ENCODE measurements at regions of chr12 and their contacts with region 1.

Region 1: GRCh38 chr12:96285158-96285557 is 91.0 kb downstream of the ELK3 start:
- DNase-seq: no peak
- H3K4me3 ChIP-seq: no peak overlapping the region
- H3K27ac ChIP-seq: peak overlapping the region in 3 of 4 donors; percentile 12 to 23 (median 16)
- H3K4me1 ChIP-seq: peaks cover 0 to 13% (median under 1%) of the 10 kb centered on the region in 4 donors
- H3K27me3 ChIP-seq: no peaks in the 10 kb centered on the region
- CTCF ChIP-seq: no peak
- EP300 ChIP-seq: no peak
- POLR2A ChIP-seq: no peak

Region 2: DNA sequence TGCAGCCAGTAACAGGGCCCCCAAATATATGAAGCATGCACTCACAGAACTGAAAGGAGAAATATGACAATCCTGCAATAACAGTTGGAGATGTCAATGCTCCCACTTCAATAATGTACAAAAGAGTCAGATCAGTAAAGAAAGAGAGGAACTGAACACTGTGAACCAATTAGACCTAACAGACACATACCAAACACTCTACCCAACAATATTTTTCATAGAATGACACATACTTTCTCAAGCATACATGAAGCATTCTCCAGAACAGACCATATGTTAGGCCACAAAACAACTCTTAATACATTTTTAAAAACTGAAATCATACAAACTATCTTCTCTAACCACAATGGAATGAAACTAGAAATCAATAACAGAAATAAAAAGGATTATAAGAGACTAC is 10.8 kb before region 1 on chr12:
- intact Hi-C with region 1: no loop called
- DNase-seq: no peak
- H3K4me3 ChIP-seq: no peak overlapping the region
- H3K27ac ChIP-seq: no peak overlapping the region
- H3K4me1 ChIP-seq: peaks cover 0 to 8% (median 3%) of the 10 kb centered on the region in 4 donors
- H3K27me3 ChIP-seq: no peaks in the 10 kb centered on the region
- CTCF ChIP-seq: no peak
- EP300 ChIP-seq: no peak
- POLR2A ChIP-seq: no peak

Region 3: GRCh38 chr12:96343347-96343954 is 58.3 kb after region 1 on chr12:
- intact Hi-C with region 1: no loop called
- DNase-seq: no peak
- H3K4me3 ChIP-seq: no peak overlapping the region
- H3K27ac ChIP-seq: no peak overlapping the region
- H3K4me1 ChIP-seq: peaks cover 0 to 32% (median 24%) of the 10 kb centered on the region in 4 donors
- H3K27me3 ChIP-seq: no peaks in the 10 kb centered on the region
- CTCF ChIP-seq: no peak
- EP300 ChIP-seq: no peak
- POLR2A ChIP-seq: no peak

Region 4: DNA sequence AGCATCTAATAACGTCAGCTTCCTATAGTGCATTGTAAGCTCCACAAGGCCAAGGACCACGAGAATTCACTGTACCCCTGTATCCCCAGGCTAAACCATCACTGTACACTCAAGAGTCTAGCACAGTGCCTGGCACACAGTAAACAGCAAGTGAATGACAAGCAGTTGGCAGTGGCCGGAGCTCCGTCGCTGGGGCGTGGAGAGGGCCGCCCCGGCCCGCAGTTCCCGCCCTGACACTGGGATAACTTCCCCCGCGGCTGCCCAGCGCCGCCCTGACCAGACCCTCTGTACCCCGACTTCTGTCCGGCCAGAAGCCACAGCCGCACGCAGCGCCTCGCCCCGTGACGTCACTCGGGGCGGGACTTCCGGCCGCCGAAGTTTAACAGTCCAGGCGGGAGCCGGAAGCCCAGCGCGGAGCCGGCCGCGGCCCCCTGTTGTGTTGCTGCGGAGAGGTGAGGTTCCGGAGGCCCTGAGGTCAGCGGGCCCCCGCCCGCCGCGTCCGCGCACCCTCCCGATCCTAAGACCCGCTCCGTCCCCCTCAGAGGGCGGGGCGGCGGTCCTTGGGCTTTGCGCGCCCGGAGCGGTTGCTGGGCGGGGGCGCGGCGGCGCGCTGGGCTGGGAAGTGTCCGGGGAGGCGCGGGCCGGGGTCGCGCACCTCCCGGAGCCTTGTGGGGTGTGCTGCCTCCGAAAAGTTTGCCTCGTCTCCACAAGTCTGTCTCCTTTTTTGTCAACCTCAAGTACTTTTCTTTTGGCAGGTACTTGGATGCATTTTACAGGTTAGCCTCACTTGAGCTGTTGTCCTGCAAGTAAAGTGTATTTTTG is 621.9 kb after region 1 on chr12 and contains the start of gene NEDD1:
- intact Hi-C with region 1: loop called (anchors 5 kb)
- DNase-seq: peak; percentile 91
- H3K4me3 ChIP-seq: peak within 1 kb of the TSS; percentile 67 to 97 (median 89)
- H3K27ac ChIP-seq: peak within 1 kb of the TSS; percentile 83 to 97 (median 90)
- H3K4me1 ChIP-seq: peaks cover 0 to 32% (median 17%) of the 10 kb centered on the region in 4 donors
- H3K27me3 ChIP-seq: no peaks in the 10 kb centered on the region
- CTCF ChIP-seq: no peak
- EP300 ChIP-seq: no peak
- POLR2A ChIP-seq: peak; percentile 48 to 51
- total RNA-seq, gene NEDD1: 17.1 to 31.6 (median 20.9) TPM

Measured in sigmoid colon (tissue), 7 donors.